ENCODE measurements at regions of chr4 and their contacts with region 1.

Region 1: GRCh38 chr4:119628308-119629141 is at the start of gene PDE5A:
- DNase-seq: peak; percentile 90
- H3K4me3 Mint-ChIP-seq: peak within 1 kb of the TSS; percentile 98
- H3K27ac Mint-ChIP-seq: peak within 1 kb of the TSS; percentile 98
- H3K4me1 Mint-ChIP-seq: peaks cover 8% of the 10 kb centered on the region
- H3K27me3 Mint-ChIP-seq: no peaks in the 10 kb centered on the region
- CTCF ChIP-seq: peak; percentile 59
- total RNA-seq, gene PDE5A: 41.4 and 41.9 TPM in 2 replicates

Region 2: DNA sequence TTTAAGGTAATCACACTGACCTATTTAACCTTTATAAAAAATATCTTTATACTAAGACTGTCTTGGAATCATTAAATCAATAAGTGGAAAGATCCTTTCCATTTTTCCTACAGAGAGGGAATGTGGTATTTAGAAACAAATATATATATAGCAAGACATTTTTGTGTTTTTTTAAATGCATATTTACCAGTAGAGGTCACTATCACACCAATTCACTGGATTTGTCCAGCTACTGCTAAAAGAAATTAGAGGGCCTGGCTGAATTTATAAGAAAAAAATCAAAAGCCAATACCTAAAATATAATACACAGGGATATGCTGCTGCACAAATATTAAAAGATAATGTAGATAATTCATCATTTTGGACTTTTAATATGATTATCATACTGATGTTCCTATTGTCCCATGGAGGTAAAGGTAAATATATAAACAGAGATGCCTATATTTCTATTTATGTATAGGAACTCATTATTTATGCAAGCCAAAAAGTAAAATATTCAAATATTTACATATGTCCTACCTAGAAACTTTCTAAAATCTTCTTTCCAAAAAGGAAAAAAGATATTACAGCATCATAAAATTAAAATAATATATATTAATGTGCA is 69.4 kb before region 1 on chr4:
- CTCF ChIA-PET with region 1: interaction called, 7 read pairs
- intact Hi-C with region 1: loop called (anchors 2 kb)
- DNase-seq: no peak
- H3K4me3 Mint-ChIP-seq: no peak overlapping the region
- H3K27ac Mint-ChIP-seq: no peak overlapping the region
- H3K4me1 Mint-ChIP-seq: no peaks in the 10 kb centered on the region
- H3K27me3 Mint-ChIP-seq: no peaks in the 10 kb centered on the region
- CTCF ChIP-seq: no peak

Region 3: GRCh38 chr4:119683518-119683917 is 55.0 kb after region 1 on chr4:
- CTCF ChIA-PET with region 1: no interaction called
- intact Hi-C with region 1: loop called (anchors 10 kb)
- DNase-seq: no peak
- H3K4me3 Mint-ChIP-seq: no peak overlapping the region
- H3K27ac Mint-ChIP-seq: no peak overlapping the region
- H3K4me1 Mint-ChIP-seq: peaks cover 17% of the 10 kb centered on the region
- H3K27me3 Mint-ChIP-seq: no peaks in the 10 kb centered on the region
- CTCF ChIP-seq: no peak

Region 4: GRCh38 chr4:119729835-119730670 is 101.5 kb after region 1 on chr4:
- CTCF ChIA-PET with region 1: interaction called, 15 read pairs
- intact Hi-C with region 1: loop called (anchors 2 kb)
- DNase-seq: peak; percentile 77
- H3K4me3 Mint-ChIP-seq: peak overlapping the region; percentile 28
- H3K27ac Mint-ChIP-seq: peak overlapping the region; percentile 96
- H3K4me1 Mint-ChIP-seq: peaks cover 83% of the 10 kb centered on the region
- H3K27me3 Mint-ChIP-seq: no peaks in the 10 kb centered on the region
- CTCF ChIP-seq: no peak

Region 5: DNA sequence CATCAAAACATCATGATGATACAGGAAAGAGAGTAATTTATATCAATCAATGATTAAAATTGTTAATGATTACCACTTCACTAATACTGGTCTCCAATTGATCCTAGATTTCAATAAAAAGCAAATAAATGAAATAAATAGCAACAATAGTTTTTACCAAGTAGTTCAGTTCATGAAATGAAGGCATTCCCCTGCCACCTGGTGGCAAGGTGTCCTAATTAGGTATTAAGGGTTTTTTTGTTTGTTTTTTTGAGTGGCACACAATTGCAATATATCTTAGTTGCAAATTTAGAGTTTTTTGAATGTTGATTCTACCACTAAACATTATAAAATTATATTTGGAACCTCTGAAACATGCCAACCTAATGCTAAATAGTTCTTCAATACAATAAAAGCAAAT is 157.4 kb after region 1 on chr4:
- CTCF ChIA-PET with region 1: interaction called, 10 read pairs
- intact Hi-C with region 1: loop called (anchors 1 kb)
- DNase-seq: peak; percentile 42
- H3K4me3 Mint-ChIP-seq: no peak overlapping the region
- H3K27ac Mint-ChIP-seq: no peak overlapping the region
- H3K4me1 Mint-ChIP-seq: no peaks in the 10 kb centered on the region
- H3K27me3 Mint-ChIP-seq: no peaks in the 10 kb centered on the region
- CTCF ChIP-seq: peak; percentile 54

Region 6: GRCh38 chr4:119872371-119873031 is 244.0 kb after region 1 on chr4:
- CTCF ChIA-PET with region 1: interaction called, 3 read pairs
- intact Hi-C with region 1: loop called (anchors 2 kb)
- DNase-seq: peak; percentile 3
- H3K4me3 Mint-ChIP-seq: peak overlapping the region; percentile 22
- H3K27ac Mint-ChIP-seq: peak overlapping the region; percentile 92
- H3K4me1 Mint-ChIP-seq: peaks cover 23% of the 10 kb centered on the region
- H3K27me3 Mint-ChIP-seq: no peaks in the 10 kb centered on the region
- CTCF ChIP-seq: no peak

Measured in Calu3 (cell line).